Thyroid gland (tissue), 4 donors: ENCODE measurements at regions of chr20 and their contacts with region 1.

Region 1: DNA sequence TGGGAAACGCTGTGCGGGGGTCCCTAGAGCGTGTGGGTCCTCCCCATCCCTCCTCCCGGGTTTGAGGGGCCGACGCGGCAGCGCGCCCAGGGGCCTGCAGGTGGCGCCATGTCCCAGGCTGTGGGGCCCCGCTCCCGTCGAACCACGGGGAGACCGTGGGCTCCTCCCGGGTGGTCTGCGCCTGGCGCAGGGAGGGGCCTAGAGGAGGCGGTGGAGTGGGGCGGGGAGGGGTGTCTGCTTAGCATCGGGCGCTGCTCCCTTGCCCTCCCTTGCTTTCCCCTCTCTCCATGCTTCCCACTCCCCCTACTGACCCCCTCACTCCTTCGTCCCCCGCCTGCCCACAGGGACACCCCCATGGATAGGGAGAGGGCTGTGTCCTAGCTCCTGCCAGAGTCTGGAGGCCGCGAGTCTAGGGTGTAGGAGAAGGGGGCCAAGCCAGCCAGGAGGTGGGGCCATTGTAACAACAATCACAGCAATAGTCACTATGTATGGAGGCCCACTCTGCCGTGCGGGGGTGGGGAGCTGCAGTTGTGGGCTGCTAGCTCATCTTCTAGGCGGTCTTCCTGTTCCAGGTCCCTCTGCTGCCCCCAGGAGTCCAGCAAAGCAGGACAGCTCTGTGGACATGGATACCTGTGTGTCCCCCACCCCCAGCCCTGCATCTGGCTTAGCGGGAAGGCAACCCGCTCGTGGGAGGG is 51.7 kb downstream of the CHMP4B start:
- DNase-seq: peak; percentile 74 to 75
- H3K4me3 ChIP-seq: no peak overlapping the region
- H3K27ac ChIP-seq: peak overlapping the region in 2 of 3 donors; percentile 32 to 61
- H3K4me1 ChIP-seq: peaks cover 15% of the 10 kb centered on the region in 2 donors
- H3K27me3 ChIP-seq: no peaks in the 10 kb centered on the region
- CTCF ChIP-seq: peak; percentile 31 to 73 (median 60)
- POLR2A ChIP-seq: no peak

Region 2: DNA sequence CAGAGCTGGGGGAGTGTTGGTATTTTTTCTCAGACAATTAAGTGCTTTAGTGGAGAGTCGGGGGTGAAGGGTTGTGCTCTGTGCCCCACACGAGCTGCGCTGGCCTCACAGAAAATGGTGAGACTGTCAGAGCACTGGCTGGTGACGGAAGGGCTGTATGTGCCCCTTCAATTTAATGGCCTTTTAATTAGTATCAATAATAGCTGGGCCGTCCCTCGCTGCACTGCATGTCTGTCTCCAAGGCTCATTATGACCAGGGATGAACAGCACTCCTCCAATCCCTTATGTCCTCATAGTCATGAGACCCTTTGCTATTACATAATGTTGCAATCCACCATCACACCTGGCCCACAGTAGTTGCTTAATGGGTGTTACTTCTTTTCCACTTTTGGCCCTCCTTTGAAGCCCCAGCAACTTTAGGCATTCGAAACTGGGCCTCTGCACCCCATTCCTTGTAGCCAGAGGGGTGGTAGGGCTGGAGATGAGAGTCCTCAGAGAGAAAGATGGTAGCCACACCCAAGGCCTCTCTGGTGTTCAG is 121.4 kb after region 1 on chr20:
- intact Hi-C with region 1: loop called (anchors 10 kb)
- DNase-seq: no peak
- H3K4me3 ChIP-seq: no peak overlapping the region
- H3K27ac ChIP-seq: no peak overlapping the region
- H3K4me1 ChIP-seq: no peaks in the 10 kb centered on the region
- H3K27me3 ChIP-seq: no peaks in the 10 kb centered on the region
- CTCF ChIP-seq: no peak
- POLR2A ChIP-seq: no peak

Region 3: DNA sequence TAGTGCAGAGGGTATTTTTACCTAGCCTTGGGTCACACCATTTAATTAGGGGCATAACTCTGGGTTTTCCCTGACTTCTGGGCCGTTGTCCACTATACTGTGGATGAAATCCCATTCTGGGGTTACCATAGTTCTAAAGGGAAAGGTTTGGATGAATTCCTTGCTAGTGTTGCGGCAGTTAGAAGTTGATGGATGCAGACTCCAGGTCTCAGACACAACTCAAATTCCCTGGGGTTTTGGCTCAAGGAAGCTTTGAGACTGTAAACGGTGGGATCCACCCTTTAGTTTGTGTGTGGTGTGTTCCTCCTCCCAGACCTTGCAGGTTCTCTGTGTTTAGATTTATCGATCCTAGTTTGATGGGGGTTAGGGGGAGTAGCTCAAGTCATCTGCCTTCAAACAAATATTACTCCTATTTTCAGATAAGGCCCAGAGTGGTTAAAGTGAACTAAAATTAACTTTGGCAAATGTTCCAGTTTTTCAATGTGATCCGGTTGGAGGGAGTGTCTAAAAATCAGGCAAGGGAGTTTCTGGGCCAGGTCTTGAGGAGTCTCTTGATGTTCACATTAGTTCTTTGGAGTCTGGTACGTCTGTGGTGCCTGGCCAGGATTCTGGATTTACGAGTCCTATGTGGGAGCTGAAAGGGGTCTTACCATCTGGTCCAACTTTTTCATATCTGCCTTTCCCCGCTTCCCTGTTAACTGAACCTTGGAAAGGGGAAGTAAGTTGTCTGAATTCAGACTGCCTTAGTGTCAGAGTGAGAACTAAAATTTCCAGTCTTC is 132.4 kb after region 1 on chr20:
- intact Hi-C with region 1: no loop called
- DNase-seq: peak; percentile 52 to 53
- H3K4me3 ChIP-seq: peak overlapping the region; percentile 93 to 95 (median 94)
- H3K27ac ChIP-seq: peak overlapping the region; percentile 96 to 98 (median 97)
- H3K4me1 ChIP-seq: peaks cover 44 to 64% of the 10 kb centered on the region in 2 donors
- H3K27me3 ChIP-seq: no peaks in the 10 kb centered on the region
- CTCF ChIP-seq: no peak
- POLR2A ChIP-seq: peak in 1 of 2 donors; percentile 13

Region 4: GRCh38 chr20:34069341-34070078 is 206.7 kb after region 1 on chr20:
- intact Hi-C with region 1: loop called (anchors 2 kb)
- DNase-seq: peak; percentile 78 to 83
- H3K4me3 ChIP-seq: no peak overlapping the region
- H3K27ac ChIP-seq: peak overlapping the region; percentile 38 to 54 (median 45)
- H3K4me1 ChIP-seq: peaks cover 26 to 35% of the 10 kb centered on the region in 2 donors
- H3K27me3 ChIP-seq: no peaks in the 10 kb centered on the region
- CTCF ChIP-seq: peak; percentile 45 to 94 (median 86)
- POLR2A ChIP-seq: no peak

Region 5: GRCh38 chr20:34129518-34130162 is 266.8 kb after region 1 on chr20:
- intact Hi-C with region 1: loop called (anchors 5 kb)
- DNase-seq: peak; percentile 53 to 56
- H3K4me3 ChIP-seq: no peak overlapping the region
- H3K27ac ChIP-seq: no peak overlapping the region
- H3K4me1 ChIP-seq: no peaks in the 10 kb centered on the region
- H3K27me3 ChIP-seq: no peaks in the 10 kb centered on the region
- CTCF ChIP-seq: peak; percentile 66 to 90 (median 86)
- POLR2A ChIP-seq: no peak